HepG2 (cell line): ENCODE measurements at regions of chr3 and their contacts with region 1.

Region 1: DNA sequence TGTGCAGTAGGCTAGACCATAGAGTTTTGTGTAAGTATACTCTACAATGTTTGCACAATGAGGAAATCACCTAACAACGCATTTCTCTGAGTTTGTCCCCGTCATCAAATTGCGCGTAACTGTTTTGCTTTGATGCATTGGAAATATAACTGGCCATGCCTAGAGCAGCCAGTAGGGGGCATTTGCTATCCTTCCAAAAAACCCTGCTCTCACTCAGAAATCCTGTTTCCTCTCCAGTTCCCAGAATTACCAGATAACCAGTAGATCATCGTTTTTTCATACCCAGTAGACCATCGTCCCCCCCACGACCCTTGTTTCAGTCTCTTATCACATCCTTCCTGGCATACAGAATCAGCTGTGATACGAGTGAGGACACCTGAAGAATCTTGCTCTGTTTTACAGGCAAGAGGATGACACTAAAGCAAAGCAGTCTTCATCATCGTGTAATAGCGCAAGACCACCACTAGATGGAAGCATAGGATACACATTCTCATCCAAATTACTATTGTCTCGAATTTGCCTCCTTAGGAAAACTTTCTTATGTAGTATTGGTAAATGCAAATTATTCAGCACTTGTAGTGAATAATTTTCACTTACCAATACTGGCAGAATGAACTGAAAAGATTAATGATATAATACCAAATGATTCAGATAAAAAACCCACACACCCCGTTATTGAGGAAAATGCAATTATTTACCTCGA is 4.4 kb upstream of the GABRR3 start:
- DNase-seq: peak; percentile 78
- ATAC-seq: peak; percentile 98
- H3K4me3 ChIP-seq: peak overlapping the region in 2 of 3 experiments; percentile 38 to 45; a peak in 2 of 6 replicates
- H3K27ac ChIP-seq: no peak overlapping the region
- H3K4me1 ChIP-seq: no peaks in the 10 kb centered on the region
- H3K27me3 ChIP-seq: no peaks in the 10 kb centered on the region
- CTCF ChIP-seq: peak; percentile 87
- EP300 ChIP-seq: no peak
- POLR2A ChIP-seq: no peak
- RAD21 ChIP-seq: no peak; the same call in none of the 2 replicates

Region 2: GRCh38 chr3:97559388-97559787 is 480.1 kb before region 1 on chr3:
- CTCF ChIA-PET with region 1: no interaction called
- POLR2A ChIA-PET with region 1: no interaction called
- in situ Hi-C with region 1: no loop called
- intact Hi-C with region 1: no loop called
- DNase-seq: no peak
- ATAC-seq: no peak
- H3K4me3 ChIP-seq: no peak overlapping the region
- H3K27ac ChIP-seq: no peak overlapping the region
- H3K4me1 ChIP-seq: no peaks in the 10 kb centered on the region
- H3K27me3 ChIP-seq: no peaks in the 10 kb centered on the region
- CTCF ChIP-seq: no peak
- EP300 ChIP-seq: no peak
- POLR2A ChIP-seq: no peak
- RAD21 ChIP-seq: no peak

Region 3: GRCh38 chr3:98188545-98188944 is 149.1 kb after region 1 on chr3:
- CTCF ChIA-PET with region 1: interaction called, 3 read pairs
- POLR2A ChIA-PET with region 1: no interaction called
- in situ Hi-C with region 1: no loop called
- intact Hi-C with region 1: loop called (anchors 1 kb)
- DNase-seq: peak; percentile 16
- ATAC-seq: peak; percentile 88
- H3K4me3 ChIP-seq: no peak overlapping the region
- H3K27ac ChIP-seq: no peak overlapping the region
- H3K4me1 ChIP-seq: no peaks in the 10 kb centered on the region
- H3K27me3 ChIP-seq: no peaks in the 10 kb centered on the region
- CTCF ChIP-seq: peak; percentile 55
- EP300 ChIP-seq: no peak
- POLR2A ChIP-seq: no peak
- RAD21 ChIP-seq: no peak

Region 4: GRCh38 chr3:98329392-98330124 is 290.1 kb after region 1 on chr3:
- CTCF ChIA-PET with region 1: interaction called, 104 read pairs
- POLR2A ChIA-PET with region 1: no interaction called
- in situ Hi-C with region 1: loop called (anchors 5 kb)
- intact Hi-C with region 1: loop called (anchors 1 kb)
- DNase-seq: peak; percentile 40
- ATAC-seq: peak; percentile 93
- H3K4me3 ChIP-seq: no peak overlapping the region
- H3K27ac ChIP-seq: no peak overlapping the region
- H3K4me1 ChIP-seq: 0 out of 2 replicates have a peak, but pooled peaks cover 10% of the 10 kb centered on the region
- H3K27me3 ChIP-seq: no peaks in the 10 kb centered on the region
- CTCF ChIP-seq: peak; percentile 85
- EP300 ChIP-seq: no peak
- POLR2A ChIP-seq: no peak
- RAD21 ChIP-seq: peak; percentile 72

Region 5: DNA sequence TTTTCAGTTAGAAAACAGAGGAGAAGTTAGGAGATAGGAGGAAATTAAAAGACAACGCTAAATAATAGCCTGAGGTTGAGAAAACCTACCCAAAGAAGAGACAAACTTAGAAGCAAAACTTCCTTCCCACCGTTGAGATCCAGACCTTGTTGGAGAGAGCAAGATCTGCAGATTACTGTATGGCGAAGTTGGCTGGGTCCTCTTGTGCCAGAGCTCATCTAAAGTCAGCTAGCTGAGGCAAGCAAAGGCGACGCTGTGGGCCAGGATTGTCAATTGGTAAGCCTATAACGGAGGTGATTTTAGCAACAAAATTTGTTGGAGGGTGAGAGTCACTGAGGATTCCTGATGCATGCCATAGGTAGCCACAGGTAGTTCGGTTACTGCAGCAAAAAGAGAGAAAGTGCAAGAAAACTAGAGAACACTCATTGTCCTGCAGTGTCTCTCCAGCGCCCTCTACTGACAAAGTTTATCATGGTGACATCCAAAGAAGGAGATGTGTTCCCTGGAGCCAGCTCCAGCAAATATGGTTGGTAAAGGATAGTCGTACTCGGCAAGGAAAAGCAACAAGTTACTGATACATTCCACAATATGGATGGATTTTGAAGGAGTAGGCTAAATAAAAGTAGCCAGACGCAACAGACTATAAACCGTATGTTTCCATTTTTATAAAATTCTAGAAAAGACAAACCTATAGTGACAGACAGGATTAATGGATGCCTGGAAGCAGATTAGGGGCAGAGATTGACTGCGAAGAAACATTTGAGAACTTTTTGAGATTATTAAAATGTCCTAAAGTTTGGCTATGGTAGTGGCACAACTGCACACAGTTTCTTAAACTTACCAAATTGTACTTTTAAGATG is 304.4 kb after region 1 on chr3:
- CTCF ChIA-PET with region 1: interaction called, 9 read pairs
- POLR2A ChIA-PET with region 1: no interaction called
- in situ Hi-C with region 1: no loop called
- intact Hi-C with region 1: loop called (anchors 1 kb)
- DNase-seq: peak; percentile 62
- ATAC-seq: peak; percentile 90
- H3K4me3 ChIP-seq: no peak overlapping the region
- H3K27ac ChIP-seq: no peak overlapping the region
- H3K4me1 ChIP-seq: no peaks in the 10 kb centered on the region
- H3K27me3 ChIP-seq: no peaks in the 10 kb centered on the region
- CTCF ChIP-seq: peak; percentile 79
- EP300 ChIP-seq: no peak
- POLR2A ChIP-seq: no peak
- RAD21 ChIP-seq: no peak

Region 6: GRCh38 chr3:98573181-98573728 is 533.8 kb after region 1 on chr3:
- CTCF ChIA-PET with region 1: no interaction called
- POLR2A ChIA-PET with region 1: no interaction called
- in situ Hi-C with region 1: loop called (anchors 25 kb)
- intact Hi-C with region 1: no loop called
- DNase-seq: no peak
- ATAC-seq: no peak
- H3K4me3 ChIP-seq: no peak overlapping the region
- H3K27ac ChIP-seq: no peak overlapping the region
- H3K4me1 ChIP-seq: peaks cover 25% of the 10 kb centered on the region
- H3K27me3 ChIP-seq: no peaks in the 10 kb centered on the region
- CTCF ChIP-seq: 0 out of 2 replicates have a peak, but pooled peaks have one; percentile 12
- EP300 ChIP-seq: no peak
- POLR2A ChIP-seq: no peak
- RAD21 ChIP-seq: no peak

Region 7: GRCh38 chr3:98593046-98593936 is 553.8 kb after region 1 on chr3 and contains the start of gene CPOX:
- CTCF ChIA-PET with region 1: no interaction called
- POLR2A ChIA-PET with region 1: no interaction called
- in situ Hi-C with region 1: no loop called
- intact Hi-C with region 1: loop called (anchors 10 kb)
- DNase-seq: peak; percentile 96
- ATAC-seq: peak; percentile 98
- H3K4me3 ChIP-seq: peak within 1 kb of the TSS; percentile 66 to 85 (median 82)
- H3K27ac ChIP-seq: peak within 1 kb of the TSS; percentile 66
- H3K4me1 ChIP-seq: peaks cover 51% of the 10 kb centered on the region
- H3K27me3 ChIP-seq: no peaks in the 10 kb centered on the region
- CTCF ChIP-seq: peak; percentile 23
- EP300 ChIP-seq: peak in 1 of 2 experiments; percentile 60; a peak in 2 of 4 replicates
- POLR2A ChIP-seq: peak; percentile 13 to 66; a peak in 3 of 4 replicates
- RAD21 ChIP-seq: no peak; the same call in 1 of the 2 replicates
- total RNA-seq, gene CPOX: 35.2 and 37.2 TPM in 2 replicates